ENCODE measurements at regions of chr1 and their contacts with region 1.

Region 1: DNA sequence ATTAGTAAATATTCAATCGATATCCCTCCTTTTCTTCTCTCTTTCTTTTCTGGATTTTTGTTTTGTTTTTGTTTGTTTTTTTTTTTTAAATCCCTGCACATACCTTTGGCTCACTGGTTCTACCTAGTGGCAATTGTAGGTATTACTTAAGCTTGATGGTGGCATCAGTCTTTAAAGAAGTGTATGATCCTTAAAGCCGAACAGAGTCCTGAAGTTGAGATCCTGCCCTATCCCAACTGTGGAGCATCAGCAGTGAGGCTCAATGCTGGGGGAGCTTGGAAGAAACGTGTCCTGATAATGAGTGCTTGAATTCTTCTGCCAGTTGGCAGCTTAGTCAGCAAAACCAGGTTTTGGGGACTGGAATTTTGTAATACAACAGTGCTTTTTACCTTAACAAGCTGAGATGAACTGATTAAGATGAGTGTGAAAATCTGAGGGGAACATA is 60.8 kb downstream of the FASLG start:
- DNase-seq: no peak
- ATAC-seq: peak; percentile 89
- H3K4me3 Mint-ChIP-seq: no peak overlapping the region
- H3K27ac Mint-ChIP-seq: peak overlapping the region; percentile 0
- H3K4me1 Mint-ChIP-seq: peaks cover 16% of the 10 kb centered on the region
- H3K27me3 Mint-ChIP-seq: no peaks in the 10 kb centered on the region
- CTCF ChIP-seq: peak; percentile 54

Region 2: DNA sequence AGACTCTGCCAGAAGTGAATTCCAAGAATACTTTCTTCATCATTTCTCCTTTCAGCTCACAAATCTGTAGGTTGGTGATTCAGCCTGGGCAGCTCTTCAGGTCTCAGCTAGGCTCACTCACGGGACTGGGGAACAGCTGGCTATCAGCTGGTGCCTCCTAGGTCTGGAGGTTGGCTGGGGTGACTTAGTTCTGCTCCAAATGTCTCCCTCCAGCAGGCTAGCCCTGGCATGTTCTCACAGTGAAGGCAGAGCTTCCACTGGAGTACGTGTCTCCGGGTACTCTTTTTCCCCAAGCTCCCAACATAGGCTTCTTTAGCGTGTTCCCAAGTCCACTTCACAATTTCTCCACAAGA is 965.4 kb before region 1 on chr1:
- CTCF ChIA-PET with region 1: no interaction called
- POLR2A ChIA-PET with region 1: interaction called, 12 read pairs
- DNase-seq: no peak
- ATAC-seq: peak; percentile 81
- H3K4me3 Mint-ChIP-seq: no peak overlapping the region; the same call in 1 of the 2 replicates
- H3K27ac Mint-ChIP-seq: peak overlapping the region; percentile 81
- H3K4me1 Mint-ChIP-seq: peaks cover 16% of the 10 kb centered on the region
- H3K27me3 Mint-ChIP-seq: peaks cover 3% of the 10 kb centered on the region
- CTCF ChIP-seq: no peak

Region 3: DNA sequence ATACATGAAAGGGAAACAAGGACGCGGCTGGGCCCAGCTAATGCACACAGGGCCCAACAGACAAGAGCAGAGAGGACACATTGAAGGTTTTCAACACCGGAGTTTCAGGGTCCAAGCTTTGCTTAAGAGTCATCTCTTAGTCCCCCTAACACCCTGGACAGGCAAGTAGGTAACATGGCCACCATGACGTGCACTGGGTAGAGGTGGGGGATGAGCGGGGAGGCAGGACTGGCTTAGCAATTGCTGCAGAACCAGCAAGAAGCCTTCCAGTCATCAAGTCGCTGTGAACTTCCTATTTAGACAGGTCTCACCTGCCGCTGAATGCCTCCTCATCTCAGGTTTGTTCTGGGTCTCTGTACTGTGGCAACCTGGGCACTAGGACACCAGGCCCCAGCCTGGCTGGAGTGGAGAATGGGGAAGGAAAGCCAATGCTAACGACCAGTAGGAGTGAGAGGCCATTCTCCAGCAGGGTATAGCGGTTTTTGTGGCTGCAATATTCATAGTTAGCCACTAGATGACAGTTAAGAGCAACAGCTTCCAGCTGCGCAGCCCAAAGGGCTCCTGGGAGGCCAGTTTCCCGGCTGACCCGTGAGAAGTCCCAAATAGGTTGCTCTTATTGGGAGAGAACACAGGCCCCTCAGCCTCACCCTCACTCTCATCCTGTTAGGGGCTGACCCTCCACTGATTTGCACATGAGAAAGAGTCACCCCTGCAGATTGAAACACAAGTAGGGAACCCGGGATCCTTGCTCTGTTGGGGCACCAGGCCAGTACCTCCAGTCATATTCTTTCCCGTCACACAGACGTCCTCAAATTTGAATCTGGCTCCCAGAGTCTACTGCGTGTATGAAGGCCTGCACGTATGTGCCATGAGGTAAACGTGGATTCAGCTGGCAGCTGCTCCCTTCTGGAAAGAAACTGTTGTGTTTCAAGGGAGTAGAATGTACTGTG is 269.9 kb before region 1 on chr1:
- CTCF ChIA-PET with region 1: interaction called, 10 read pairs
- POLR2A ChIA-PET with region 1: no interaction called
- DNase-seq: peak; percentile 57
- ATAC-seq: peak; percentile 99
- H3K4me3 Mint-ChIP-seq: no peak overlapping the region
- H3K27ac Mint-ChIP-seq: no peak overlapping the region
- H3K4me1 Mint-ChIP-seq: peaks cover 5% of the 10 kb centered on the region; the same call in 1 of the 2 replicates
- H3K27me3 Mint-ChIP-seq: no peaks in the 10 kb centered on the region; the same call in 1 of the 2 replicates
- CTCF ChIP-seq: peak; percentile 79

Region 4: GRCh38 chr1:172609528-172609927 is 110.2 kb before region 1 on chr1:
- CTCF ChIA-PET with region 1: interaction called, 27 read pairs
- POLR2A ChIA-PET with region 1: no interaction called
- DNase-seq: no peak
- ATAC-seq: peak; percentile 64; the same call in 1 of the 2 replicates
- H3K4me3 Mint-ChIP-seq: no peak overlapping the region
- H3K27ac Mint-ChIP-seq: no peak overlapping the region
- H3K4me1 Mint-ChIP-seq: no peaks in the 10 kb centered on the region
- H3K27me3 Mint-ChIP-seq: no peaks in the 10 kb centered on the region
- CTCF ChIP-seq: no peak

Region 5: DNA sequence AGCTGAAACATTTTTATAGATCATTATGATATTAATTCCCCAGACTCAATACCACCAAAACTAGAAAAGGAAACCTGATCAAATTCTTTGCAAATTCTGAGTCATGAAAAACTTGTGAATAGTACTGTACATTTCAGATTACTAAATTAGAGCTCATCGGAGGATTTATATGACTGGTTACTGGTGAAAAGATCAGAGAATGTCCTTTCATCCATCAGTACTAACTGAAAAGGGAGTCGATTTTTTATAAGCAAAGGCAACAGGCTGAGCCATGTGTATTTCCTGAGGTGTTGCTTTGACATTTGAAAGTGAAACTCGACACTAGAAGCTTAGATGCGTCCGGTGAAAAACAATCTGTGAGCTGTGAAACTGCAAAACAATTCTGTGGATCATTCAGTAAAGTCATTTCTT is 175.3 kb after region 1 on chr1:
- CTCF ChIA-PET with region 1: no interaction called
- POLR2A ChIA-PET with region 1: no interaction called
- DNase-seq: no peak
- ATAC-seq: no peak
- H3K4me3 Mint-ChIP-seq: no peak overlapping the region
- H3K27ac Mint-ChIP-seq: no peak overlapping the region
- H3K4me1 Mint-ChIP-seq: peaks cover 13% of the 10 kb centered on the region
- H3K27me3 Mint-ChIP-seq: no peaks in the 10 kb centered on the region
- CTCF ChIP-seq: no peak